ENCODE measurements at regions of chr17 and their contacts with region 1.

Region 1: DNA sequence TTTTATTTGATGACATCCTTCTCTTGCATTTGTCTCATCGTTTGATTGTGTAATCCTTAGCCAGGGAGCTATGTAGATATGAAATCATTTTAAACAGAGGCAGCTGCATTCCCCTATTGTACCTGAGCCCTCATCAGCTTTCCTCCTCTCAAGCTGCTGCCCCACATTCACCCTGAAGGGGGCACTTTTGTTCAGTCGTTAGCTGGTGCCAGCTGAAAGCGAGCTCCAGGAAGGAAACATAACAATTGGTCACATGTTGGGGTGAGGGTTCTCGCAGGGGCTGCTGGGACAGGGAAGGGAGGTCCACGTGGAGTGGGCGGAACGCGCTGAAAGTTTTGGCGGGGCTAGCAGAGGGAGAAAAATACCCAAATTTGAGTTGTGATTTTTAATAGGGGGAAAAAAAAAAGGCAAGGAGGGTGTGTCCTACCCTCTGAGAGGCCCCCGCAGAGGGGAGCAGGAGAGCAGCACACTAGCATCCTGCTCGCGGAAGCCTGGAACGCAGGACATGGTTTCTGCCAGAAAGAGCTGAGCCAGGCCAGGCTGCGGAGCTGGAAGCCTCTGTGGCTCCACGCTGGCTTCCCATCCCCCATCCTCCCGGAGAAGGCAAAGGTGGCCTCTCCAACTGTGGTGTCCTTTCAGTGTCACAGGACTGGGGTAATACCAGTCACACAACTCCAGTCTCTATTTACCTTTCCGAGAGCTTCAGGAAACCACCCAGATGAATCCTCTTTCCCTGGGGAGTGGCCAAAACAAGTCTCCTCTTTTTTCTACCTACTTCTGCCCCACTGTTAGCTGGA is 8.5 kb upstream of the MSL1 start:
- DNase-seq: peak; percentile 87
- ATAC-seq: peak; percentile 68
- H3K4me3 ChIP-seq: peak overlapping the region; percentile 41 to 44
- H3K27ac ChIP-seq: peak overlapping the region; percentile 71
- H3K4me1 ChIP-seq: peaks cover 60 to 70% of the 10 kb centered on the region in 2 experiments
- H3K27me3 ChIP-seq: no peaks in the 10 kb centered on the region
- CTCF ChIP-seq: peak; percentile 86 to 93 (median 91); a peak in 5 of 6 replicates
- POLR2A ChIP-seq: no peak
- RAD21 ChIP-seq: peak; percentile 96

Region 2: DNA sequence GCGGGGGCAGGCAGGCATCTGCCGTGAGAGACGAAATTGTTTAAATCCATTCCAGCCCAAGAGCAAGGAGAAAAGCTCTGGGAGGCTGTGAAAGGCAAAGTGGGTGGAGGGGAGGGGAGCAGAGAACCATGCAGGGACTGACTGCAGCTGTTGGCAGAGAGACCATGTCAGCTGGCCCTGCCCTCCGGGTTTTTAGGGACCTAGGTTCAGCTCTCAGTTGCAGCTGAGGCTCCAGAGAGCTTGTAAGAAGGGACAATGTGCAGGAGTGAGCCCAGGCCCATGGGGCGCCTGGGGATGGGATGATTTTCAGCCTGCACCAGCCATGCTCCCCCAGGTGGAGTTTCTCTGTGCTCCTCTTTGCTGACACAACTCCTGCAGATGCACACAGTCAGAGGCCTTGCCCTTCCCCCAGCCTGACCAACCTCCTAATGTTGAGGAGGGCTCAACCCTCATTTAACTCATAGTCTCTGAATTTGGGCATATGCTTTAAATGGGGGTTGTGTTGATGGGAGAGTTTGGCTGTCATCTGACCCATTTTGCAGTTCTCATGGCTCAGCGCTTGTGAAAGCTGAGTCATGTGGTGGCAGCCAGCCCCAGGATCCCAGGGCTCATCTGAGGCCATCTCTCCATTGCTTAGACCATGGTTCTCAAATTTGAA is 1032.8 kb before region 1 on chr17:
- CTCF ChIA-PET with region 1: no interaction called
- POLR2A ChIA-PET with region 1: no interaction called
- RAD21 ChIA-PET with region 1: no interaction called
- intact Hi-C with region 1: no loop called
- DNase-seq: no peak
- ATAC-seq: no peak
- H3K4me3 ChIP-seq: no peak overlapping the region
- H3K27ac ChIP-seq: no peak overlapping the region
- H3K4me1 ChIP-seq: no peaks in the 10 kb centered on the region
- H3K27me3 ChIP-seq: no peaks in the 10 kb centered on the region
- CTCF ChIP-seq: no peak
- POLR2A ChIP-seq: no peak
- RAD21 ChIP-seq: no peak

Region 3: GRCh38 chr17:40018211-40019121 is 94.8 kb before region 1 on chr17:
- CTCF ChIA-PET with region 1: interaction called, 9 read pairs
- POLR2A ChIA-PET with region 1: interaction called, 4 read pairs
- RAD21 ChIA-PET with region 1: interaction called, 6 to 8 read pairs
- intact Hi-C with region 1: loop called (anchors 1 kb)
- DNase-seq: no peak
- ATAC-seq: no peak
- H3K4me3 ChIP-seq: no peak overlapping the region
- H3K27ac ChIP-seq: no peak overlapping the region
- H3K4me1 ChIP-seq: peaks cover 0 to 13% of the 10 kb centered on the region in 2 experiments; a peak in 2 of 4 replicates
- H3K27me3 ChIP-seq: no peaks in the 10 kb centered on the region
- CTCF ChIP-seq: no peak
- POLR2A ChIP-seq: no peak
- RAD21 ChIP-seq: no peak

Region 4: DNA sequence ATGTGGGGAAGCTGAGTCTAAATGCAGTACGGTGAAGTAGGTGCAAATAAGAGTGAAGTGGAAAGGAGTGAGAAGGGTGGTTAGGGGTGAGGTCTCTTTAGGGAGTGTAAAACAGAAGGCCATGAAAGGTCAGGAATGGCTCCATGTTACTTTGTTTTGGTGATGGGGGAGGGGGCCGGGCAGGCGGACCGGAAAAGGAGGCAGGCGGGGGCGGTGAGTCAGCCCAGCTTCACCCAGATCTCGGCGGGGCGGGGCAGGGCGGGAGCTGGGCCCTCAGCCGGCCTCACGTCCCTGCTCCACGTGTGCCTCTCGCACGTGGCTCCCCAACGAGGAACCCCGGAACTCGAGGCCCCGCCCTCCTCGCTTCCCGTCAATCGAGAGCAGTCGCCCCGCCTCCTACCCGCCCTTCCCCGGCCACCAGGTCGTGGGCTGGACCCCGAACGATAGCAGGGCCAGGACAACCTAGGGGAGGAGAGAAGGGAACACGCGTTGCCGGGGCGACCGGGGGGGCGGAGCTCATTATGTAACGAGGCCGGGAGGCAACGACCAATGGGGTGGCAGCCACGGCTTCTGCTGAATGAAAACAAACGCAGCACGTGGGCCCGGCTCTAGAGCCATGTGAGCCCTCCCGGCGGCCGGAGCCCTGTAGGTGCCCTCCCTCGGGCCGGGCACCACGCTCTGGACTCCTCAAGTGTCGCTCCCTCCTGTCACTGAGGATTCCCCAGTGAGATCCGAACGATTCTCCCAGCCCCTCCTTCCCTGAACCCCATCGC is 14.3 kb before region 1 on chr17:
- CTCF ChIA-PET with region 1: interaction called, 69 read pairs
- POLR2A ChIA-PET with region 1: interaction called, 160 read pairs
- RAD21 ChIA-PET with region 1: interaction called, 4 read pairs
- intact Hi-C with region 1: no loop called
- DNase-seq: peak; percentile 99
- ATAC-seq: peak; percentile 76
- H3K4me3 ChIP-seq: peak overlapping the region; percentile 76 to 86
- H3K27ac ChIP-seq: peak overlapping the region; percentile 96
- H3K4me1 ChIP-seq: peaks cover 33 to 64% of the 10 kb centered on the region in 2 experiments
- H3K27me3 ChIP-seq: no peaks in the 10 kb centered on the region
- CTCF ChIP-seq: no peak
- POLR2A ChIP-seq: no peak
- RAD21 ChIP-seq: no peak

Region 5: GRCh38 chr17:40168262-40168832 is 55.0 kb after region 1 on chr17:
- CTCF ChIA-PET with region 1: interaction called, 20 read pairs
- POLR2A ChIA-PET with region 1: interaction called, 4 read pairs
- RAD21 ChIA-PET with region 1: interaction called, 7 to 10 read pairs
- intact Hi-C with region 1: loop called (anchors 1 kb)
- DNase-seq: peak; percentile 28
- ATAC-seq: peak; percentile 73
- H3K4me3 ChIP-seq: no peak overlapping the region
- H3K27ac ChIP-seq: peak overlapping the region; percentile 18; the same call in 1 of the 2 replicates
- H3K4me1 ChIP-seq: peaks cover 0 to 4% of the 10 kb centered on the region in 2 experiments; a peak in 2 of 4 replicates
- H3K27me3 ChIP-seq: no peaks in the 10 kb centered on the region
- CTCF ChIP-seq: peak; percentile 65 to 67 (median 66); a peak in 5 of 6 replicates
- POLR2A ChIP-seq: no peak
- RAD21 ChIP-seq: peak; percentile 80

Region 6: GRCh38 chr17:40191237-40192208 is 78.2 kb after region 1 on chr17:
- CTCF ChIA-PET with region 1: interaction called, 13 read pairs
- POLR2A ChIA-PET with region 1: no interaction called
- RAD21 ChIA-PET with region 1: interaction called in 1 of 2 experiments, 4 read pairs
- intact Hi-C with region 1: loop called (anchors 2 kb)
- DNase-seq: peak; percentile 43
- ATAC-seq: peak; percentile 90
- H3K4me3 ChIP-seq: peak overlapping the region; percentile 7 to 25; a peak in 2 of 4 replicates
- H3K27ac ChIP-seq: no peak overlapping the region
- H3K4me1 ChIP-seq: peaks cover 13 to 28% of the 10 kb centered on the region in 2 experiments
- H3K27me3 ChIP-seq: no peaks in the 10 kb centered on the region
- CTCF ChIP-seq: peak; percentile 61 to 81 (median 74)
- POLR2A ChIP-seq: no peak
- RAD21 ChIP-seq: peak; percentile 80